Tibial artery (tissue), 4 donors: ENCODE measurements at regions of chr11 and their contacts with region 1.

Region 1: DNA sequence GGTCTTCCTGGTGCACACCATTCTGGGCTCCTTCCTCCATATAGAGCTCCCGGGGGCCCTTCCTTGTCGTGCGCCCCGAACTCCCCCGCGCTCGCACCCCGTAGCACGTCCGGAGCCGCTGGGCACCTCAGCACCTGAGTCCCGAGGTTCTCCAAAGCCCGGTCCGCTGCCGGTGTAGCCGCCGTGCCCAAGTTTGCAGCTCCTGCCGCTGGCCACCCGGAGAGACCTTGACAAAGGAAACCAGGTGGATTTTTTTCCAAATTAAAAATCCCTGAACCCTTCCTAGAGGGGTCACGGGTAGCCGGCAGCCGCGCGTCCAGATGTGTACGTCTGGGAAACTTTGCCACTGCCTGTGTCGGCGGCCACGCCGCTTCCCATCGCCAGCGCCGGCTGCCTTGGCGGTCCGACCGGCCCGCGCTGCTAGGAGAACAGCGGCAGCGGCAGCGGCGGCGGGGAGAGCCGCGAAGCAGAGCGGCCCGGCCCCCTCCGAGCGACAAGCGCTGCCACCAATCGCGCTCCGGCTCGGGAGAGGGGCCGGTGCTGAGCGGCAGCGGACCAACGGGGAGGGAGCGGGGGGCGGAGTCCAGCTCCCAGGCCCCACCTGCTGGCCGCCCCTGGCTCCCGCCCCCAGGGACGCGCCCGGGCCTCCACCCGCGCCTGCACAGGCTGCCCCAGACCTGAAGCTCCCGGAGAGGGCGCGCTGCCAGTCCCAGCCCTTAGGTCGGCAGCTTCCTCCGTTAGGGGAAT is at the start of gene GALNT18:
- DNase-seq: peak; percentile 87 to 95
- H3K4me3 ChIP-seq: peak within 1 kb of the TSS; percentile 73 to 94
- H3K27ac ChIP-seq: peak within 1 kb of the TSS; percentile 78 to 87
- H3K4me1 ChIP-seq: peaks cover 0 to 38% (median 23%) of the 10 kb centered on the region in 4 donors
- H3K27me3 ChIP-seq: no peaks in the 10 kb centered on the region
- CTCF ChIP-seq: peak; percentile 49 to 61

Region 2: GRCh38 chr11:11265994-11266606 is 355.6 kb before region 1 on chr11:
- intact Hi-C with region 1: no loop called
- DNase-seq: no peak
- H3K4me3 ChIP-seq: no peak overlapping the region
- H3K27ac ChIP-seq: no peak overlapping the region
- H3K4me1 ChIP-seq: peaks cover 0 to 14% (median 8%) of the 10 kb centered on the region in 4 donors
- H3K27me3 ChIP-seq: no peaks in the 10 kb centered on the region
- CTCF ChIP-seq: peak; percentile 68 to 75

Region 3: GRCh38 chr11:11400635-11401232 is 221.0 kb before region 1 on chr11:
- intact Hi-C with region 1: loop called (anchors 2 kb)
- DNase-seq: no peak
- H3K4me3 ChIP-seq: no peak overlapping the region
- H3K27ac ChIP-seq: no peak overlapping the region
- H3K4me1 ChIP-seq: peaks cover 0 to 57% (median 12%) of the 10 kb centered on the region in 4 donors
- H3K27me3 ChIP-seq: no peaks in the 10 kb centered on the region
- CTCF ChIP-seq: no peak

Region 4: DNA sequence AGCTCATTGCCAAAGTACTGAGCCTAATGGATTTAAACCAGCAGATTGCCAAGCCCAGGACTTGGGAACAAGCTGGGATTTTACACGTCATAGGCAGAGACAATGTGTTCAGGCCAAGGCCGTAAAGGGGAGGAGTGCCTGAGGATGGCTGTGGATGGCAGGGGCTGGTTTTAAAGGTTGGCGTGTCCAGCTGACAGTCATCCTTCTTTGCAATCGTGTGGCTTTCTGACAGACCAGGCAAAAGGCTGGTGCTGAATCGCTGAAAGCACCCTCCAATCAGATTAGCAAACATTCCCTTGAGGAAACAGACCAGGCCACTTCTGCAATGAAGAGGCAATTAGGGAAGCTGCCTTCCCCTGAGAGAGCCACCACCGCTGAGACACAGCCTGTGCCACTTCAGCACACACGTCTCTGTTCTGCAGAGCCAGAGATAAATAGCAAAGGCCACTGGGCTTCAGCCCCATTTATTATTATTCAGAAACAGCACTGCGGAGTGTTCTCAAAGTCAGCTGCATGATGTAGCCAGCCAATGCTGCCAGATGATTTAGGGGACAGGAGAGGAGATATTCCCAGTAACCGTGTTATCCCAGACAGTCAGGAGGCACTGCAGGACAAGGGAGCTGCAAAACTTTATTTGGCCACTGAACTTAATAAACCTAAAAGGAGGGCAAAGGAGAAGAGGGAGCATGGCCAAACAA is 214.5 kb before region 1 on chr11:
- intact Hi-C with region 1: loop called (anchors 2 kb)
- DNase-seq: peak; percentile 60 to 90
- H3K4me3 ChIP-seq: no peak overlapping the region
- H3K27ac ChIP-seq: peak overlapping the region; percentile 82 to 83
- H3K4me1 ChIP-seq: peaks cover 0 to 76% (median 45%) of the 10 kb centered on the region in 4 donors
- H3K27me3 ChIP-seq: no peaks in the 10 kb centered on the region
- CTCF ChIP-seq: peak; percentile 45 to 55

Region 5: DNA sequence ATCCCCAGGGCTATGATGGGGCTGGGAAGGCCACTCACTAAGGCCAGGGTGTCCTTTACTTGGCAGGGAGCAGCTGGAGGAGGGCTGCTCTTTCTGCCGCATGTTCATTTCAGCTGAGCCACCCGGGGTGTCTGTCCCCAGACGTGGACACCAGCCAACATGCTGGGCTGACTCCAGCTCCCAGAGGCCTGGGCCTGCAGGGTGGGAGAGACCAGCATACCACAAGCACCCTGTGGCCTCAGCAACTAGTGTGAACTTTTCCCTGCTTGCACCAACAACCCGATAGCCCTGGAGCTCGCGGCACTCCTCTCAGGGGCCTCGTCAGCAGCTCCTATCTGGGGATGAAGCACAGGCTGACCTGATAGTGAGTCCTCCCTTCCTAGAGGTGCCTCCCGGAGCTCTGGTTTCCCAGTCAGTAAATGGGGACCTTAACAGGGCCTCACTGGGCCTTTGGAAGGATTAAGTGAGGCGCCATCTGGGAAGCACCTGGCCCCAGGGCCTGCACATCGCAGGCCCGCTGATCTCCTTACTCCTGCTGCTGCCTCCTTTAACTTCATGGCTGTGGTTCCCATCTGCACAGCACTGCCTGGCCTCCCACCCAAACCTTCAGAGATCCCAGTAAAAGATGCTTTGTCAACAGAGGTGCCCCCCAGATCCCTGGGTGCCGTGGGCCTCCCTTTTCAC is 83.3 kb before region 1 on chr11:
- intact Hi-C with region 1: no loop called
- DNase-seq: peak in 1 of 2 donors; percentile 85
- H3K4me3 ChIP-seq: peak overlapping the region in 1 of 2 donors; percentile 4
- H3K27ac ChIP-seq: peak overlapping the region; percentile 69 to 75
- H3K4me1 ChIP-seq: peaks cover 0 to 71% (median 53%) of the 10 kb centered on the region in 4 donors
- H3K27me3 ChIP-seq: no peaks in the 10 kb centered on the region
- CTCF ChIP-seq: no peak

Region 6: GRCh38 chr11:11569936-11570491 is 51.7 kb before region 1 on chr11:
- intact Hi-C with region 1: loop called (anchors 10 kb)
- DNase-seq: peak; percentile 88 to 95
- H3K4me3 ChIP-seq: peak overlapping the region; percentile 18 to 24
- H3K27ac ChIP-seq: peak overlapping the region; percentile 72 to 74
- H3K4me1 ChIP-seq: peaks cover 0 to 46% (median 34%) of the 10 kb centered on the region in 4 donors
- H3K27me3 ChIP-seq: no peaks in the 10 kb centered on the region
- CTCF ChIP-seq: peak; percentile 8 to 27

Region 7: GRCh38 chr11:11748706-11749365 is 127.1 kb after region 1 on chr11:
- intact Hi-C with region 1: no loop called
- DNase-seq: no peak
- H3K4me3 ChIP-seq: no peak overlapping the region
- H3K27ac ChIP-seq: no peak overlapping the region
- H3K4me1 ChIP-seq: no peaks in the 10 kb centered on the region
- H3K27me3 ChIP-seq: no peaks in the 10 kb centered on the region
- CTCF ChIP-seq: no peak